ENCODE measurements at regions of chr17 and their contacts with region 1.

Region 1: GRCh38 chr17:45135192-45135977 is at the start of gene ACBD4:
- DNase-seq: peak; percentile 98
- ATAC-seq: peak; percentile 91
- H3K4me3 Mint-ChIP-seq: peak within 1 kb of the TSS; percentile 82
- H3K27ac Mint-ChIP-seq: peak within 1 kb of the TSS; percentile 87
- H3K4me1 Mint-ChIP-seq: peaks cover 9% of the 10 kb centered on the region
- H3K27me3 Mint-ChIP-seq: peaks cover 3% of the 10 kb centered on the region
- total RNA-seq, gene ACBD4: 12.7 to 13.4 TPM

Region 2: DNA sequence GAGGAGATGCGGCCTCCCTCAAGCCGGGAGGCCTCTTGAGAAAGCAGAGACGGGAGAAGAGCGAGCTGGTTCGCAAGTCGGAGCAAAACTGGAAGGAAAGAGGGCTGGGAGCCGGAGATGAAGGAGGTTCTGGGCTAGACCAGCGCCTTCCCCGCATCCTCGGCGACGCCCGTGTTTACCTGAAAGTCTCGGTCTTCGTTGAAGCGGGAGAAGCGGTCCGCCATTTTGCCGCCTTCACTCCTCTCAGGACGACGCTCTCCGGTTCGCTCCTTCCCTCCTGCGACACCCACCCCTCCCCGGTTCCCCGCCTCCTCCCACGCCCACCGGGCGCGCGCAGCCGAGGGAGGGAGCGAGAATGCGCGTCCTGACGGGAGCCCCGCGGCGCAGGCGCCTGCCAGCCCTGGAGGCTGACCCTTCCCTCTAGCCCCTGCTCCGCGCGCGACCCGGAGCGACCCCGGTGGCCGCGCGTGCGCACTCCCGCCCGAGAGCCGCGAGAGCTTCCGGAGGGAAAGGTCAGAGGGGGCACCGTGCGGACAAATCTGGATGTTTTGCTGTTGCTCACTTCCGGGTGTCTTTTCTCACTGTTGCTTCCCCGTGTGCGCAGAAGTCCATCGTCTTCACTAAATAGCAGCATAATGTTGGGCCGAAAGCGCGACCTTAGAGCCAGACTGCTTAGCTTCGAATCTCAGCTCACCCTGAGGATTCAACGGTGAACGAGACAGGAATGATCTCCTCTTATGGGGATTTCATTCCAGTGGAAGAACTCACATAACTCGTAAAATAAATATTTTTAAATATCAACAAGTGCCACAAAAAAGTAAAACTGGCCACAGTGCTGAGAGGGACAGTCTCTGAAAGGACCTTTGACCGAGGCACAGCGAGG is 632.0 kb before region 1 on chr17 and contains the start of gene GPATCH8:
- CTCF ChIA-PET with region 1: no interaction called
- POLR2A ChIA-PET with region 1: no interaction called
- intact Hi-C with region 1: loop called in 1 of 2 experiments (anchors 2 kb)
- DNase-seq: peak; percentile 97
- ATAC-seq: peak; percentile 96
- H3K4me3 Mint-ChIP-seq: peak within 1 kb of the TSS; percentile 97
- H3K27ac Mint-ChIP-seq: peak within 1 kb of the TSS; percentile 98
- H3K4me1 Mint-ChIP-seq: peaks cover 34% of the 10 kb centered on the region
- H3K27me3 Mint-ChIP-seq: peaks cover 3% of the 10 kb centered on the region
- total RNA-seq, gene GPATCH8: 39.6 to 43.2 TPM

Region 3: DNA sequence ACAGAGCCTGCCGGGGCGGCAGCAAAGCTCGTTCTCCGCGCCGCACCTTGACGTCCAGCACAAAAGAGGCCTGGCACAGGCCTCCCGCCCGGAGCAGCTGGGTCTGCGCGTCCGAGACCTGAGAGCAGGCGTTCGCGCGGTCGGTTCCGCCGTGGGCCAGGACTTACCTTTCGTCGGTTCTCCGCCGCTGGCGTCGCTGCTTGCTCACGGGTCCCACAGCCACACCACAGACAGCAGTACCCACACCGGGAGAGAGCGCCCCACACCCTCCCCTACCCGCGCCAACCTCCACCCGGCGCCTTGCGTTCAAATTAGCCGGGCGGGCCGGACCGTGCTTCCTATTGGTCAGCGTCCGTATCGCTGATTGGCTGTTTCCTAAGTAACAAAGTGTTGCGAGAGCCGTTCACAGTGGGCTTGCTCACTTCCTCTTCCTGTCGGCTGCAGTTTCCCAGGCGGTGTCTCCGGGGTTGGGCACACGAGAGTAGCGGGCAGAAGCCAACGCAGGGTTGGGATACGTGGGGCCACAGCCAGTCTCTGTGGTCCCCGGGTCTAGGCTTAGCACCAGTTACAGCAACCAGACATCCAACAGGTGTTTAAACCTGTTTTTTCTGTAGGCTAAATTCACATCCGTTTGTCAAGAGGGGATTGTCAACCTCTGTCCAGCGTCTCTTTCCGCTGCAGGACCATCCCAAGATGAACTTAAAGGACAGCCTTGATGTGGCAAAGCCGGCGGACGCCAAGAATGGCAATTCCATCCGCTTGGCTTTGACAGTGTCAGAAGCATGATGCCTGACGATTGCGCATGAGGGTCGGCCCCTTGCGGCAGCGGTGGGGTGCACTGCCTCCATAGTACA is 187.7 kb before region 1 on chr17 and contains the start of gene KIF18B:
- CTCF ChIA-PET with region 1: no interaction called
- POLR2A ChIA-PET with region 1: no interaction called
- intact Hi-C with region 1: loop called in 1 of 2 experiments (anchors 1 kb)
- DNase-seq: peak; percentile 96
- ATAC-seq: peak; percentile 98
- H3K4me3 Mint-ChIP-seq: peak within 1 kb of the TSS; percentile 90
- H3K27ac Mint-ChIP-seq: peak within 1 kb of the TSS; percentile 88
- H3K4me1 Mint-ChIP-seq: peaks cover 4% of the 10 kb centered on the region
- H3K27me3 Mint-ChIP-seq: no peaks in the 10 kb centered on the region
- total RNA-seq, gene KIF18B: 38.9 to 48.7 TPM

Region 4: DNA sequence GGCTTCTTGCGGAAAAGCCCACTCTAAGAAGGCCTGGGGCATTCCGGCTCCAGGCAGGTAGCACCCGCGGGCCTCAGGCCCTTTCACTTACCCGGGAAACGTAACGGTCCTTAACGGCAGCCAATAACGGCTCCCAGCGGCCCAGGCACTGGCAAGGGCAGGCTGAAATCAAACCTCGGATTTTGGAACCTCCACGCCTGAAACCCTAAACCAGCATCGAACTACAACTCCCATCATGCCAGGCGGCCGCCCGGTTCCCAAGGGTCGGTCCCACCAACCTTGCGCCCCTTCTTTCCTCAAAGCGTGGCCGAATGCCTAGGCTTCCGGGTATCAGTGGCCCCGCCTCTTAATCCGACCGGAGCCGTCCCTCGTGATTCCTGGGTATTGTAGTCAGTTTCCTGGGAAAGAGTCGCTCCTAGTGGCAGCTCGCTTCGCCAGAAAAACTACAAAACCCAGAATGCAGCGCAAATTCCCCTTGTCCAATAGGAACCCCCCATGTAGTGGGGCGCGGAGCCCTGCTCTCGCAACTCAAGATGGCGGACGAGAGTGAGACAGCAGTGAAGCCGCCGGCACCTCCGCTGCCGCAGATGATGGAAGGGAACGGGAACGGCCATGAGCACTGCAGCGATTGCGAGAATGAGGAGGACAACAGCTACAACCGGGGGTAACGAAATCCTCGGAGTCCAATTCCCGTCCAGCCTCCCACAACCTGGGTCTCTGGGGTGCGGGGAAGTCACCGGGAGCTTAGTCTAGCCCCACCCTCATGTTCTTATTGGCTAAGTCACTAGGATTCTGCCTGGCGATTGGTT is 74.4 kb before region 1 on chr17 and contains the start of gene NMT1:
- CTCF ChIA-PET with region 1: interaction called, 4 read pairs
- POLR2A ChIA-PET with region 1: no interaction called
- intact Hi-C with region 1: loop called in 1 of 2 experiments (anchors 1 kb)
- DNase-seq: peak; percentile 97
- ATAC-seq: peak; percentile 92
- H3K4me3 Mint-ChIP-seq: peak within 1 kb of the TSS; percentile 84
- H3K27ac Mint-ChIP-seq: peak within 1 kb of the TSS; percentile 96
- H3K4me1 Mint-ChIP-seq: peaks cover 42% of the 10 kb centered on the region
- H3K27me3 Mint-ChIP-seq: no peaks in the 10 kb centered on the region
- total RNA-seq, gene NMT1: 170 to 175 TPM

Region 5: GRCh38 chr17:45155029-45155428 is 19.6 kb after region 1 on chr17:
- CTCF ChIA-PET with region 1: interaction called, 222 read pairs
- POLR2A ChIA-PET with region 1: interaction called, 65 read pairs
- intact Hi-C with region 1: loop called in 1 of 2 experiments (anchors 1 kb)
- DNase-seq: no peak
- ATAC-seq: peak; percentile 11
- H3K4me3 Mint-ChIP-seq: no peak overlapping the region
- H3K27ac Mint-ChIP-seq: peak overlapping the region; percentile 37
- H3K4me1 Mint-ChIP-seq: peaks cover 44% of the 10 kb centered on the region
- H3K27me3 Mint-ChIP-seq: no peaks in the 10 kb centered on the region

Region 6: GRCh38 chr17:45197555-45198334 is 62.4 kb after region 1 on chr17:
- CTCF ChIA-PET with region 1: interaction called, 201 read pairs
- POLR2A ChIA-PET with region 1: interaction called, 9 read pairs
- intact Hi-C with region 1: loop called (anchors 1 kb)
- DNase-seq: peak; percentile 95
- ATAC-seq: peak; percentile 100
- H3K4me3 Mint-ChIP-seq: no peak overlapping the region
- H3K27ac Mint-ChIP-seq: no peak overlapping the region
- H3K4me1 Mint-ChIP-seq: peaks cover 2% of the 10 kb centered on the region
- H3K27me3 Mint-ChIP-seq: no peaks in the 10 kb centered on the region

Region 7: GRCh38 chr17:45317112-45317928 is 181.9 kb after region 1 on chr17:
- CTCF ChIA-PET with region 1: interaction called, 3 read pairs
- POLR2A ChIA-PET with region 1: interaction called, 3 read pairs
- intact Hi-C with region 1: loop called in 1 of 2 experiments (anchors 1 kb)
- DNase-seq: peak; percentile 100
- ATAC-seq: peak; percentile 81
- H3K4me3 Mint-ChIP-seq: peak overlapping the region; percentile 91
- H3K27ac Mint-ChIP-seq: peak overlapping the region; percentile 89
- H3K4me1 Mint-ChIP-seq: peaks cover 65% of the 10 kb centered on the region
- H3K27me3 Mint-ChIP-seq: no peaks in the 10 kb centered on the region

Region 8: GRCh38 chr17:45351831-45352230 is 216.4 kb after region 1 on chr17:
- CTCF ChIA-PET with region 1: no interaction called
- POLR2A ChIA-PET with region 1: no interaction called
- intact Hi-C with region 1: no loop called
- DNase-seq: no peak
- ATAC-seq: no peak
- H3K4me3 Mint-ChIP-seq: no peak overlapping the region
- H3K27ac Mint-ChIP-seq: no peak overlapping the region
- H3K4me1 Mint-ChIP-seq: peaks cover 25% of the 10 kb centered on the region
- H3K27me3 Mint-ChIP-seq: peaks cover 9% of the 10 kb centered on the region

Region 9: DNA sequence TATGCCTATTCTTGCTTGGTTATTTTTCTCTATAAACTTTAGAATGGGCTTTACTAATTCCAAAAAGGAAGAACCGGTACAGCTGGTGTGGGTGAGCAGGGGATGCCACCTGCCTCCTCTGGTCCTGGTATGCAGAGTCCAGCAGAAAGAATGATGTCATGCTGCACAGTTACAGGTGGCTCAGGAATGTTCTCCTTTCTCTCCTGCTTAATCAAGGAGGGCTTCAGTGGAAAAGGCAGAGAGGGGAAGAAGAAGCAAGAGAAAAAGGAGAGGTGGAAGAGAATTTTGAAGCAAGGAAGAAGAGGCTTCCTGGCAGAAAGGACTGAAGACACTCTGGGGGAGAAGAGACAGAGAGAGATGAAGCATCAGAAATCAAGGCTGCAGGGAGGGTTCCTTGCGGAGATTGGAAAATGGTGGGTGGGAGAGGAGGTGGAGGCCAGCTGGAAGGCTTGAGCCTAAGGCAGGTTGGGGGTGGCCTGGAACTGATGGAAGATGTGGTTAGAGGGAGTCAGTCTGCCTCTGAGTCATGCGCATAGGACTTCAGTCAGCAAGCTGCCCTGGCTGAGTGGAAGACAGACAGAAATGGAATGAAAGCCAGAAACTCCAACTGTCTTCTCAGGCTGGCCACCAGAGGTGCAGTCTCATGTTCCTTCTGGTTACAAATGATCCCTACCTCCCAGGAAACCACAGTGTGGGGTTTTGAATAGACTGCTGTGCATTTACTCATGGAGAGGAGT is 584.1 kb after region 1 on chr17:
- CTCF ChIA-PET with region 1: no interaction called
- POLR2A ChIA-PET with region 1: no interaction called
- intact Hi-C with region 1: no loop called
- DNase-seq: peak; percentile 9
- ATAC-seq: no peak
- H3K4me3 Mint-ChIP-seq: no peak overlapping the region
- H3K27ac Mint-ChIP-seq: no peak overlapping the region
- H3K4me1 Mint-ChIP-seq: no peaks in the 10 kb centered on the region
- H3K27me3 Mint-ChIP-seq: peaks cover 24% of the 10 kb centered on the region

Measured in activated CD4-positive, alpha-beta T cell treated with anti-CD3 and anti-CD28 coated beads for 36 hours (primary cell).